Endothelial cell of umbilical vein (primary cell): ENCODE measurements at regions of chr7 and their contacts with region 1.

Region 1: GRCh38 chr7:37201003-37201875 is 247.4 kb downstream of the ELMO1 start:
- DNase-seq: peak; percentile 87
- H3K4me3 ChIP-seq: no peak overlapping the region
- H3K27ac ChIP-seq: no peak overlapping the region
- H3K4me1 ChIP-seq: peaks cover 3% of the 10 kb centered on the region
- H3K27me3 ChIP-seq: no peaks in the 10 kb centered on the region
- CTCF ChIP-seq: peak; percentile 79 to 90
- POLR2A ChIP-seq: no peak

Region 2: GRCh38 chr7:36440880-36441279 is 760.4 kb before region 1 on chr7:
- CTCF ChIA-PET with region 1: interaction called, 30 read pairs
- POLR2A ChIA-PET with region 1: no interaction called
- dilution Hi-C with region 1: no loop called
- intact Hi-C with region 1: loop called (anchors 1 kb)
- DNase-seq: peak; percentile 48
- H3K4me3 ChIP-seq: no peak overlapping the region
- H3K27ac ChIP-seq: no peak overlapping the region
- H3K4me1 ChIP-seq: no peaks in the 10 kb centered on the region
- H3K27me3 ChIP-seq: no peaks in the 10 kb centered on the region
- CTCF ChIP-seq: peak in 1 of 2 donors; percentile 12
- POLR2A ChIP-seq: no peak

Region 3: DNA sequence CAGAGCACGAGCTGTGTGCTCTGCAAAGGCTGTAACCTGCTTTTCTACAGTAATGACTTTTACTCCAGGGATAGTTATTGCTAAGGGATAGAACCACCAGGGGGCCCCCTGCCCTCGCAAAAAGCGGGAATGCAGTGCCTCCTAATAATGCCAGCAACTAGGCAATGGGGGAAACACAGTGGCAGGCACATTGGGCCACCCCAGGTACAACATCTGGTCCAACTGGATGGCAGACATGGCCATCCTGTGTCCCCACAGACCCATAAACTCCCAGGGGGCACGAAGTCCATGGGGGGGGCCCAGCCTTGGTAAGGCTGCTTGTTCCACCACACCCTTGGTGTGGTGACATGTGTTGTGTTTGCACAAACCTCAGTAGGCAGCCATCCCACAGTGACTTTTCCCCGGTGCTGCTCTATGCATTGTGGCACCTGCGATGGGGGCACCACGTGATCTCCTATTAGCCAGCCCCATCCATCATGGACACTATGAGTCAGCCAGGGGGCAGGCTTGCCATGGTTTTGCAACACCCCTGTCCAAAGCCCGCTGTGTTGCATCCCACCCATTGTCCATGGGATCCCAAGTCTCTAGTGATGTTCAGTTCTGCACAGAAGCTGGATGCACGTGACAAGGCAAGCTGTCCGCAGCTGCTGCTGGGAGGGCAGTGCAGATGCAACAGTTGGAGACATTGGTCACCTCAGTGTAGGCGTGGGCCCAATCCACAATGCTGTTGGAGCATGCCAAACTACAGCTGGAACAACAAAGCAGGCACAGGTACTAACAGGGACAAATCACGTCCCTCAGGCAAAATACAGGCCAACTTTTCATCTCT is 727.6 kb before region 1 on chr7:
- CTCF ChIA-PET with region 1: interaction called, 19 read pairs
- POLR2A ChIA-PET with region 1: no interaction called
- dilution Hi-C with region 1: no loop called
- intact Hi-C with region 1: loop called (anchors 1 kb)
- DNase-seq: peak; percentile 40
- H3K4me3 ChIP-seq: no peak overlapping the region
- H3K27ac ChIP-seq: peak overlapping the region; percentile 54
- H3K4me1 ChIP-seq: peaks cover 22% of the 10 kb centered on the region
- H3K27me3 ChIP-seq: no peaks in the 10 kb centered on the region
- CTCF ChIP-seq: peak; percentile 55 to 57
- POLR2A ChIP-seq: no peak

Region 4: DNA sequence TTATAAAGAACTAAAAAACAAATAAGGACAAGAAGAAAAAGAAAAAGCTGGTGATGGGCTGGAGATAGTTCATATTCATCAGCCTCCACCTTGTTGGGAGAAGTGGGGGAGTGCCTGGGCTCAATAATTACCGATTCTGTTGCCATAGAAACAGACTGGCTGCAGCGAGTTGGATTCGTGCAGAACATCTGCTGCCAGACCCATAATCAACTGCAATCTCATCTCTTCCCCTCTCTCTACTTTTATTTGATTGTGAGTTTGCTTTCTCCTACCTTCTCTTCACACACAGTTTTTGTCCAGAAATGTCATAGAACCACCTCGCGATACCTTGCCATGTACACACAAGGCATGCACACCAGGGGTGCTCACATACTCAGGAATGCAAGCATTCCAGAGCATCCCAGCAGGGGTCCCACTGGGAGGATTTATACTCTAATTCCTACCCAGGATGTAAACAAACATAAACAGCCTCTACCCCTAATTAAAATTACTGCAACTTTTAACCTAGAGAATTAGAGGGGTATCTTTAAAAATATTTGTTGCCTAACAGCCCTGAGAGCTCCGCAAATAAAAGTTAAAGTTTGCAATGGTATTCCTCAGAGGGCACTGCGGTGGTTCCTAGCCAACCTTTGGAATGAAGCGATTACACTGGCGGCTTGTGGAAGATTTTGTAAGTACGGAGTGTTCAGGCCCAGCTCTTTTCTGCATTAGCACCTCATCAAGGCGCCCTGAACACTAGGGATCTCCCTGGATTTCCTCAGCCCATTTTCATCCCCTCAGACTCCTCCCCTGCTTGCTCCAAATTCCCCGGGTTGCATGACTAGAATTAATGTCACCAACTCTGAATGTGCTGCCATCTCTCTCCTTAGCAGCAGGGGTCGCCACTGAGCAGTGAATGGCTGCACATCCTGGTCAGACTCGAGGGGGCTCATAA is 214.5 kb before region 1 on chr7:
- CTCF ChIA-PET with region 1: interaction called, 35 read pairs
- POLR2A ChIA-PET with region 1: no interaction called
- dilution Hi-C with region 1: loop called (anchors 25 kb)
- intact Hi-C with region 1: loop called (anchors 1 kb)
- DNase-seq: peak; percentile 54
- H3K4me3 ChIP-seq: no peak overlapping the region
- H3K27ac ChIP-seq: no peak overlapping the region
- H3K4me1 ChIP-seq: no peaks in the 10 kb centered on the region
- H3K27me3 ChIP-seq: no peaks in the 10 kb centered on the region
- CTCF ChIP-seq: peak; percentile 86 to 92
- POLR2A ChIP-seq: no peak

Region 5: DNA sequence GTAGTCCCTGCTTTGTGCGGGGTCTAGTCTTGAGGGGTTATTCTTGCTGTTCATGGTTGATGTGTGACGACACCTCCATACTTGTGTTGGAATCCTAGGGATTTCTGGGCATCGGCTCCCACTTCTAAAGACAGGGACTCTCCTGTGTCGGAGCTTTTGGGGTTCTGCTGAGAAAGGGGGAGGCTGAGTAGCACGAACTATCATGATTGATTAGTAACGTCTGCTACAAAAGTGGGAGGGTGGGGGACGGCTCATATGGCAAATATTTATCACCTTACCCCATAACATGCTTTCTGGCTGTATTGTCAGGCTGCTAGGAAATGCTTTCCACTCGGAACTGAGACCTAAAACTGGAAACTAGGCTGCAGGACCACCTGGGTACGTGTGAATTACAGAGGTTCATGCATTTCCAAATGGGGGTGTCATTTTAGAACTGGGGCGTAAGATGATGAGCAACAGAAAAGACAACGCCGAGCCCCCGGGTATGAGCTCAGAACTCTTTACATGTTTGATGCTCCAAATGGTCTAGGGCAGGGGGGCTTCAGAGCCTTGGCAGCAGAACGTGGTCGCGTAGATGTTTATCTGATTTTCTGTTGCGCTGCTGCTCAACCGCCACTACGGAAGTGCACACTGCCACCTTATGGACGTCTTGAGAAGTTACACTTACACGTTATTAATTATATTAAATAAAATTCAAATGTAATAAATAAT is 632.0 kb after region 1 on chr7:
- CTCF ChIA-PET with region 1: no interaction called
- POLR2A ChIA-PET with region 1: no interaction called
- dilution Hi-C with region 1: no loop called
- intact Hi-C with region 1: loop called (anchors 2 kb)
- DNase-seq: peak; percentile 40
- H3K4me3 ChIP-seq: peak overlapping the region in 1 of 3 experiments; percentile 8
- H3K27ac ChIP-seq: no peak overlapping the region
- H3K4me1 ChIP-seq: no peaks in the 10 kb centered on the region
- H3K27me3 ChIP-seq: peaks cover 0 to 2% of the 10 kb centered on the region in 2 experiments
- CTCF ChIP-seq: peak; percentile 48 to 52
- POLR2A ChIP-seq: no peak